Gastrocnemius medialis (tissue), 4 donors: ENCODE measurements at regions of chr4 and their contacts with region 1.

Region 1: GRCh38 chr4:186191200-186192065 is at the start of gene CYP4V2:
- DNase-seq: peak; percentile 49 to 62
- ATAC-seq: peak; percentile 85
- H3K4me3 ChIP-seq: peak within 1 kb of the TSS; percentile 74 to 96 (median 81)
- H3K27ac ChIP-seq: peak within 1 kb of the TSS; percentile 84 to 96 (median 90)
- H3K4me1 ChIP-seq: peaks cover 22 to 27% of the 10 kb centered on the region in 2 donors
- H3K27me3 ChIP-seq: no peaks in the 10 kb centered on the region
- CTCF ChIP-seq: peak in 1 of 5 experiments; percentile 45
- POLR2A ChIP-seq: peak; percentile 32 to 47
- total RNA-seq, gene CYP4V2: 2.9 to 11.0 (median 6.1) TPM

Region 2: DNA sequence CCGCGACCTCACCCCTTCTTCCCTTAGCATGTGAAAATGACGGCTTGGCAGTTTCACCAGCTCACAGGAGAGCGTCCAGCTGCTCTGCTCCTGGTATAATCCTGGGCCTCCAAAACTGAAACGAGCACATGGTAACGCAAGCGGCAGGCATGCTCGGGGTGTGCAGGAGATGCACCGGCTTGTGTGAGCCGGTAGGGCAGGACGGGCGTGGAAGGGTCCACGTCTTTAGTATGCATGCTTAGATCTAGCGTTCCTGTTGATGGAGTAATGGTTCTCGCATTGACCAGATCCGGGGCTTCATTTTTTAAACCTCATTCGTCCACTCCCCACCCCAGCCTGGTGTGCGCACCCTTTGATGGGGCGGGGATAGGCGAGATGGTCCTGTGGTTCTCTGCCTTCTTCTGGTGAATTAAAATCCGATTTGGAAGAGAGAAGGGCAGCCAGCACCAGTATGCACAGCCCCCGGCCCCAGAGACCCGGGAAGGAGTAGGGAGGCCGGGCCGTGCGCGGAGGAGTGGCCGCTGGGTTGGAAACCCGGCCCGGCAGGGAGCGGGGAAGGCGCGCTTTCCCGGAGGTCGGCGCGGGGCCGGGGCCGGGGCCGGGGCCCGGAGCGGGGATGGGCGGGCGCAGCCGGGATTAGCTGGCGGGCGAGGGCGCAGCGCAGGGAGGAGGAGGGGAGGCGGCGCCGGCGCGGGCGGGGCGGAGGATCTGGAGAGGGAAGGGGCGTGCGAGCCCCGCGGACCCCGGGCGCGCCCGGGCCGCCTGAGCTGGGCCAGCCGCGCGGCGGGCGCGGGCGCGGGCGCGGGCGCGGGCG is 47.1 kb before region 1 on chr4:
- in situ Hi-C with region 1: no loop called
- intact Hi-C with region 1: loop called (anchors 2 kb)
- DNase-seq: no peak
- ATAC-seq: peak; percentile 63 to 67
- H3K4me3 ChIP-seq: peak overlapping the region; percentile 41 to 66 (median 58)
- H3K27ac ChIP-seq: peak overlapping the region; percentile 44 to 60 (median 56)
- H3K4me1 ChIP-seq: peaks cover 0 to 9% of the 10 kb centered on the region in 2 donors
- H3K27me3 ChIP-seq: no peaks in the 10 kb centered on the region
- CTCF ChIP-seq: no peak
- POLR2A ChIP-seq: no peak

Region 3: DNA sequence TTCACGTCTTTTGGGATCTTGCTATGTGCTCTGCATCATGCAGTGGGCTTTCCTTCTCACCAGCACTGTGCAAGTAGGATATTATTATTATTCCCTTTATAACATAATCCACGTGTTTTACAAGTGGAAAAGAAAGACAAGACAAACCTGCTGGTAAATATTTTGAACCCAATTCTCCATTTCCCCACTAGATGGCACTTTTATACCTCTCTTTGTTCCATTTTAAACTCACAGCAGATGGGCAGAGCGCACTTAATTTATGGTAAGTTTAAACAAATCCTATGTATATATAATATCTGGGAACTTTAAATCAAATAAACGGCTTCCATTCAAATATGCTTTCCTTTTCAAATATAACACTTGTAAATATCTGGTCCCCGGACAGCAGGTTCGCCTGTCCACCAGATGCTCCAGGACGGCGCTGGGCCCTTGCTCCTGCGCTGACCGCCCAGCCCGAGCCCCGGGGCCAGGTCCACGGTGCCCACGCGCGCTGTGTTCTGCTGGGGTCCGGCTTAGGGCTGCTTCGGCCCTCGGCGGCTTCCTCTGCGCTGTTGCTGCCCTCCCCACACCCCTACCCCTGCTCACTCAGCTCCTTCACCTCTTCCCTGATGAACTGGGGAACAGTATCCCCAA is 105.7 kb after region 1 on chr4:
- in situ Hi-C with region 1: no loop called
- intact Hi-C with region 1: no loop called
- DNase-seq: no peak
- ATAC-seq: no peak
- H3K4me3 ChIP-seq: no peak overlapping the region
- H3K27ac ChIP-seq: no peak overlapping the region
- H3K4me1 ChIP-seq: no peaks in the 10 kb centered on the region
- H3K27me3 ChIP-seq: peaks cover 9 to 12% (median 12%) of the 10 kb centered on the region in 3 donors
- CTCF ChIP-seq: peak in 2 of 5 experiments; percentile 53
- POLR2A ChIP-seq: no peak

Region 4: GRCh38 chr4:186400676-186401075 is 209.2 kb after region 1 on chr4:
- in situ Hi-C with region 1: no loop called
- intact Hi-C with region 1: no loop called
- DNase-seq: no peak
- ATAC-seq: no peak
- H3K4me3 ChIP-seq: no peak overlapping the region
- H3K27ac ChIP-seq: no peak overlapping the region
- H3K4me1 ChIP-seq: no peaks in the 10 kb centered on the region
- H3K27me3 ChIP-seq: no peaks in the 10 kb centered on the region
- CTCF ChIP-seq: no peak
- POLR2A ChIP-seq: no peak